Endothelial cell of umbilical vein (primary cell): ENCODE measurements at regions of chr9 and their contacts with region 1.

Region 1: GRCh38 chr9:112486221-112487007 is at the start of gene KIAA1958:
- DNase-seq: peak; percentile 58
- H3K4me3 ChIP-seq: peak within 1 kb of the TSS; percentile 45 to 65 (median 53)
- H3K27ac ChIP-seq: peak within 1 kb of the TSS; percentile 16
- H3K4me1 ChIP-seq: peaks cover 4% of the 10 kb centered on the region
- H3K27me3 ChIP-seq: no peaks in the 10 kb centered on the region
- CTCF ChIP-seq: no peak
- POLR2A ChIP-seq: peak; percentile 66
- total RNA-seq, gene KIAA1958: 5.0 and 5.2 TPM in 2 replicates

Region 2: DNA sequence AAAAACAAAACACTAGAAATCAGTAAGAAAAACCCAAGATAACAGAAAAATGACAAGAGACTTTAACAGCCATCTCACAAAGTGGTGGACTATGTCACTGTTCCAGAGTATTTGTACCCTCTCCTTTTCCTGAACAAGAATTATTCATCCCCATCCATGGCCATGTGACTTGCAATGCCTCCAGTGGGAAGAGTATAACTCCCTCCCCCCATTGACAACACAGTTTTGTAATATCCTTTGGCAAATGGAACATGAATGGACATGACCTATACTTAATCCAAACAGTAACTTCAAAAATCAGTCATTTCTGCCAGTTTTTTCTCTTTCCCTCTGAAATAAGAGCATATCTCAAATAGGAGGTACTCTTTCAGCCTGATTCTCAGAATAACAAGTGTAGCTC is 186.9 kb before region 1 on chr9:
- CTCF ChIA-PET with region 1: no interaction called
- POLR2A ChIA-PET with region 1: no interaction called
- dilution Hi-C with region 1: no loop called
- intact Hi-C with region 1: no loop called
- DNase-seq: peak; percentile 76
- H3K4me3 ChIP-seq: no peak overlapping the region
- H3K27ac ChIP-seq: peak overlapping the region; percentile 26
- H3K4me1 ChIP-seq: peaks cover 12% of the 10 kb centered on the region
- H3K27me3 ChIP-seq: no peaks in the 10 kb centered on the region
- CTCF ChIP-seq: no peak
- POLR2A ChIP-seq: no peak

Region 3: DNA sequence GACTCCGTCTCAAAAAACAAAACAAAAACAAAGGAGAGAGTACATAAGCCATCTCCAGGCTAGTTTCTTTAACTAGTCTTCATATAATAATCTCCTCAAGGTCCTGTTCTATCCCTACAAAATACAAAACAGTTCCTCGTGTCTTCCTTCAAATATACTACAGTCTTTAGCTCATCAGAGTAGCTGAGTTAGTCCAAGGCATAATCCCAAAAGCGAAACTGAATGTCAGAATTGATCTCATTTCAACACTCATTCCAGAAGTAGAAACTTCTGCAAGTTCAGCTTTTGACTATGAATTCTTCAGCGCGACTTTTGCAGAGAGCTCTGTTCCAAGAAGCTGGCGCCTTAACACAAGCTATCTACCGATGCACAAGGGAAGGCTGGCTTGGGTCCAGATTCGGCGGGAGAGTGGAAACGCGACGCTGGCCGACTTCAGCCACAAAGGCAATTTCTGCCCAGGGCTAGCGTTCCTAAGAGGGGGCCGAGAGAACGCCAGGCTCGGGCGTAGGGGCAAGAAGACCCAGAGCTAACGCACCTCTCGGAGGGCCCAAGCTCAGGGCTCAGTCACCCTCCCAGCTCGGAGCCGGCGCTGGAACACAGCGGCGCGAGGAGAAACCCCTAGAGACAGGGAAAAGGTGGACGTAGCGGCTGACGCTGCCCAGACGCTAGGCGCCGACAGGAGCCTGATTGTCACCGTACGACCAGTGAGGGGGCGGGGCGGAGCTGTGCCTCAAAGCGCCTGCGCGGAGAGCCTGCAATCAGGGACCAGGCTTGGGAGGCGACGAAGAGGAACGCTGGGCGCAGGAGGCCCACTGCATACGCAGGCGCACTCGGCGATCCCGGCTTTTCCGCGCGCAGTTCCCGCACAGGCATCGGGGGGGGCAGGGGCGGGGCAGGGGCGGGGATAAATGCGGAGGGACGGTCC is 107.0 kb before region 1 on chr9:
- CTCF ChIA-PET with region 1: no interaction called
- POLR2A ChIA-PET with region 1: interaction called, 3 read pairs
- dilution Hi-C with region 1: no loop called
- intact Hi-C with region 1: loop called (anchors 5 kb)
- DNase-seq: peak; percentile 99
- H3K4me3 ChIP-seq: peak overlapping the region; percentile 79 to 98 (median 87)
- H3K27ac ChIP-seq: peak overlapping the region; percentile 94
- H3K4me1 ChIP-seq: peaks cover 16% of the 10 kb centered on the region
- H3K27me3 ChIP-seq: no peaks in the 10 kb centered on the region
- CTCF ChIP-seq: peak in 1 of 2 donors; percentile 5
- POLR2A ChIP-seq: peak; percentile 96